ENCODE measurements at regions of chr5 and their contacts with region 1.

Region 1: GRCh38 chr5:141320225-141321169 is at the start of gene TAF7:
- DNase-seq: peak; percentile 89 to 95 (median 90)
- H3K4me3 ChIP-seq: peak within 1 kb of the TSS; percentile 96
- H3K4me3 Mint-ChIP-seq: peak within 1 kb of the TSS; percentile 91 to 99 (median 95)
- H3K27ac ChIP-seq: peak within 1 kb of the TSS; percentile 97
- H3K27ac Mint-ChIP-seq: peak within 1 kb of the TSS; percentile 95 to 99 (median 99)
- H3K4me1 ChIP-seq: peaks cover 16% of the 10 kb centered on the region
- H3K4me1 Mint-ChIP-seq: peaks cover 26 to 48% (median 31%) of the 10 kb centered on the region in 3 donors
- H3K27me3 ChIP-seq: no peaks in the 10 kb centered on the region
- H3K27me3 Mint-ChIP-seq: peaks cover 4% of the 10 kb centered on the region in 2 donors
- total RNA-seq, gene TAF7: 70.9 to 72.2 TPM

Region 2: GRCh38 chr5:141272906-141273305 is 47.6 kb before region 1 on chr5:
- CTCF ChIA-PET with region 1: no interaction called
- POLR2A ChIA-PET with region 1: no interaction called
- DNase-seq: no peak
- H3K4me3 ChIP-seq: no peak overlapping the region
- H3K4me3 Mint-ChIP-seq: no peak overlapping the region
- H3K27ac ChIP-seq: no peak overlapping the region
- H3K27ac Mint-ChIP-seq: no peak overlapping the region
- H3K4me1 ChIP-seq: no peaks in the 10 kb centered on the region
- H3K4me1 Mint-ChIP-seq: no peaks in the 10 kb centered on the region
- H3K27me3 ChIP-seq: no peaks in the 10 kb centered on the region
- H3K27me3 Mint-ChIP-seq: no peaks in the 10 kb centered on the region

Region 3: GRCh38 chr5:141439411-141440141 is 119.1 kb after region 1 on chr5:
- CTCF ChIA-PET with region 1: no interaction called
- POLR2A ChIA-PET with region 1: no interaction called
- DNase-seq: no peak
- H3K4me3 ChIP-seq: no peak overlapping the region
- H3K4me3 Mint-ChIP-seq: no peak overlapping the region
- H3K27ac ChIP-seq: no peak overlapping the region
- H3K27ac Mint-ChIP-seq: no peak overlapping the region
- H3K4me1 ChIP-seq: no peaks in the 10 kb centered on the region
- H3K4me1 Mint-ChIP-seq: no peaks in the 10 kb centered on the region
- H3K27me3 ChIP-seq: no peaks in the 10 kb centered on the region
- H3K27me3 Mint-ChIP-seq: peaks cover 17 to 31% of the 10 kb centered on the region in 2 donors

Region 4: GRCh38 chr5:141524604-141525597 is 204.4 kb after region 1 on chr5:
- CTCF ChIA-PET with region 1: interaction called, 15 read pairs
- POLR2A ChIA-PET with region 1: interaction called, 18 read pairs
- DNase-seq: peak; percentile 40 to 58 (median 46)
- H3K4me3 ChIP-seq: no peak overlapping the region
- H3K4me3 Mint-ChIP-seq: peak overlapping the region in 1 of 7 donors; percentile 57
- H3K27ac ChIP-seq: no peak overlapping the region
- H3K27ac Mint-ChIP-seq: peak overlapping the region in 7 of 8 donors; percentile 61 to 86 (median 72)
- H3K4me1 ChIP-seq: no peaks in the 10 kb centered on the region
- H3K4me1 Mint-ChIP-seq: peaks cover 10 to 21% (median 13%) of the 10 kb centered on the region in 3 donors
- H3K27me3 ChIP-seq: no peaks in the 10 kb centered on the region
- H3K27me3 Mint-ChIP-seq: peaks cover 0 to 3% of the 10 kb centered on the region in 2 donors

Region 5: DNA sequence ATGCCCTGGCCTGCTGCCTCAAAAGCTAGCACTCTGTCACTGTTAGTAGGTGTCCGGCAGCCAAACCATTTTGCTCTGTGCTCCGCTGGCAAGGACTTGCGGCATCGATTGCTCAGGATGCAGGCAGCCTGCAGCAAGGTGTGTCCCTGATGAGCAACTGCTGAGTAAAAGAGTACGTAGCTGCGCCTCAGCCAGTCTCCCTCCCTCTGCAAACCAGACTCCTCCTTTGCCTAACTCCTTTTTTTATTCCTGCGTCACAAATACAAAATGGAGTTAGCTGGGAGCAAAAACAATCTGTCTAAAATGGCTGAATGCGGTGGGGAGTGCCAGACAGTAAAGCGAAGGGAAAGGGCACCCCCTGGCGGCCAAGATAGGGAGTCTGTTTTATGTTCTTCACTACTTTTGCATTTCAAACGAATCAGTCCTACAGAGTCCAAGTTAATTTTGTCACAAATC is 237.2 kb after region 1 on chr5:
- CTCF ChIA-PET with region 1: interaction called, 17 read pairs
- POLR2A ChIA-PET with region 1: no interaction called
- DNase-seq: peak; percentile 65 to 79 (median 71)
- H3K4me3 ChIP-seq: no peak overlapping the region
- H3K4me3 Mint-ChIP-seq: peak overlapping the region in 1 of 7 donors; percentile 1
- H3K27ac ChIP-seq: no peak overlapping the region
- H3K27ac Mint-ChIP-seq: peak overlapping the region; percentile 77 to 93 (median 87)
- H3K4me1 ChIP-seq: peaks cover 3% of the 10 kb centered on the region
- H3K4me1 Mint-ChIP-seq: peaks cover 35 to 63% (median 49%) of the 10 kb centered on the region in 3 donors
- H3K27me3 ChIP-seq: no peaks in the 10 kb centered on the region
- H3K27me3 Mint-ChIP-seq: no peaks in the 10 kb centered on the region